IMR-90 (cell line): ENCODE measurements at regions of chr9 and their contacts with region 1.

Region 1: GRCh38 chr9:114163517-114163951 is 8.2 kb downstream of the COL27A1 start:
- DNase-seq: peak; percentile 60
- ATAC-seq: peak; percentile 93
- H3K4me3 ChIP-seq: no peak overlapping the region
- H3K27ac ChIP-seq: peak overlapping the region; percentile 3; the same call in 1 of the 2 replicates
- H3K4me1 ChIP-seq: peaks cover 20% of the 10 kb centered on the region
- H3K27me3 ChIP-seq: no peaks in the 10 kb centered on the region
- CTCF ChIP-seq: no peak
- POLR2A ChIP-seq: no peak
- RAD21 ChIP-seq: no peak

Region 2: GRCh38 chr9:114174876-114175771 is 11.6 kb after region 1 on chr9:
- CTCF ChIA-PET with region 1: no interaction called
- POLR2A ChIA-PET with region 1: no interaction called
- dilution Hi-C with region 1: no loop called
- in situ Hi-C with region 1: no loop called
- intact Hi-C with region 1: loop called (anchors 1 kb)
- DNase-seq: peak; percentile 88
- ATAC-seq: peak; percentile 81
- H3K4me3 ChIP-seq: no peak overlapping the region
- H3K27ac ChIP-seq: peak overlapping the region; percentile 72
- H3K4me1 ChIP-seq: peaks cover 38% of the 10 kb centered on the region
- H3K27me3 ChIP-seq: no peaks in the 10 kb centered on the region
- CTCF ChIP-seq: no peak
- POLR2A ChIP-seq: peak; percentile 50; the same call in 1 of the 2 replicates
- RAD21 ChIP-seq: no peak

Region 3: DNA sequence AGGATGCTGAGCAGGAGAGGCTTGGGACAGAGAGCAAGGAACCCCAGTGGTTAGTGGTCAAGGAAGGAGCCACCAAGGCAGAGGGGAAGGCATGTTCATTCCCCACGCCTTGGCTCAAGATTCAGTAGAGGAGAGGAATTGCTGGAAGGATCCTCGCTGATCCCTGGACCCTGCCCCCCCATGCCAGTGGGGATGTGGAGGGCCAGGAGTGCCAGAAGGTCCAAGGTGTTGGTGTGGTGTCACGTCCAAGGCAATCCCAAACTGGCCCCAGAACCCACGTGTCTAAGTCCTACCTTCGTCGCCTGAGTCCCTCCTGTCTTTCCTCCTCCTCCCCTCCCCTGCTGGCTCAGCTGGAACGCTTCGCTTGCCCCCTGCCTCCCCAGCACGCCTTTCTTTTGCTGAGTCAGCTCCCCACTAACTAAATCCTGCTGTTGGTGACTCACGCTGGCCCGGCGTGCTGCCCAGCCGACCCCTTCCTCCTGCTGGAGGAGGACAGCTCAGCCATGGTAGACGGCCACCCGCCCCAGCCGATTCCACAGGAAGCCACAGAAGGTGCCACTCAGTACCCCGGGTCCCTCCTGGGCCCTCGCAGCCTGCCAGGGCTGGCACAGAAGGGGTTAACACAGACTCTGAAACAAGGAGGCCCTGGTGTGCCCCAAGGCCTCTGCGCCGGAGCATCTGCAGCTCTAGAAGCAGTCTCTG is 121.8 kb after region 1 on chr9:
- CTCF ChIA-PET with region 1: no interaction called
- POLR2A ChIA-PET with region 1: no interaction called
- dilution Hi-C with region 1: no loop called
- in situ Hi-C with region 1: loop called (anchors 5 kb)
- intact Hi-C with region 1: no loop called
- DNase-seq: peak; percentile 94
- ATAC-seq: peak; percentile 81
- H3K4me3 ChIP-seq: no peak overlapping the region
- H3K27ac ChIP-seq: peak overlapping the region; percentile 23; the same call in 1 of the 2 replicates
- H3K4me1 ChIP-seq: peaks cover 28% of the 10 kb centered on the region
- H3K27me3 ChIP-seq: no peaks in the 10 kb centered on the region
- CTCF ChIP-seq: 0 out of 2 replicates have a peak, but pooled peaks have one; percentile 19
- POLR2A ChIP-seq: no peak
- RAD21 ChIP-seq: 0 out of 2 replicates have a peak, but pooled peaks have one; percentile 10